ENCODE measurements at regions of chr5 and their contacts with region 1.

Region 1: GRCh38 chr5:174732036-174733020 is 7.9 kb downstream of the MSX2 start:
- DNase-seq: no peak
- H3K4me3 ChIP-seq: no peak overlapping the region
- H3K27ac ChIP-seq: no peak overlapping the region
- H3K4me1 ChIP-seq: no peaks in the 10 kb centered on the region
- H3K27me3 ChIP-seq: peaks cover 11% of the 10 kb centered on the region
- CTCF ChIP-seq: no peak
- POLR2A ChIP-seq: no peak

Region 2: DNA sequence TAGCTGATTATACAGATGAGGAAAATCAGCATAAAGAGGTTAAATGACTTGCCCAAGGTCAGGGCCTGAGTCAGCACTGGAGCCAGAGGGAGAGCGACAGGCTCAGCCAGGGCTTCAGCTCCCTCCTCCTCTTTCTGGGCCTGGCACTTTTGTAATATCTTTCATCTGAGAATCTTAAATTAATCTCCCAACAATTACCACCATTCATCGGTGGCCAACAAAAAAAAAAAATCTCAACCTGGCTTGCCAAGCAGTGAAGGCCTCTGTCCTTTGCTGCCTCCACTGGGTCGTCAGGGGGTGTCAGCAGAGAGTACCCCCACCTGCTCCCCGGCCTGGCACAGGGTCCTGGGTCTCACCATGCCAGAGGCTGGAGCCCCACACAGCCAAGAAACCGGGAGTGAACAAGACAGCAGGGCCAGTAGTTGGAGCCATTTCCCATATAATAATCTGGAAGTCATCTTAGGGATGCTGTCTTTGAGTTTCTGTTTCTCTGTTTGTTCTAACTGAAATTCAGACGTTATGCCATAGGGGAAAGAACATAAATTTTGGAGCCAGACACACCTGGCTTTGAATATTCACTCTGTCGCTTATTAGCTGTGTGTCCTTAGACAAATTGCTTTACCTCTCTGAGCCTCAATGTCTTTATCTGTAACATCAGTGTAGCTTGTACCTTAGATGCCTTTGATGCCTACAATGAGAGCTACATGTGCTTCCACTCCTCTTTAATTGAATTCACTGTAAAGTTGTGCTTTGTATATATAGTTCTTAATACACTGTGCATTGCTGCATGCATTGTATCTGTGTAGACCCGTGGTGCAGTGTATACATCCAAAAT is 307.9 kb before region 1 on chr5:
- intact Hi-C with region 1: loop called (anchors 5 kb)
- DNase-seq: no peak
- H3K4me3 ChIP-seq: no peak overlapping the region
- H3K27ac ChIP-seq: no peak overlapping the region
- H3K4me1 ChIP-seq: no peaks in the 10 kb centered on the region
- H3K27me3 ChIP-seq: no peaks in the 10 kb centered on the region
- CTCF ChIP-seq: no peak
- POLR2A ChIP-seq: no peak